ENCODE measurements at regions of chr19 and their contacts with region 1.

Region 1: GRCh38 chr19:12346896-12347295 is 13.5 kb upstream of the ZNF563 start:
- DNase-seq: peak in 3 of 9 experiments; percentile 7 to 63 (median 60)
- ATAC-seq: peak; percentile 57
- H3K4me3 ChIP-seq: no peak overlapping the region
- H3K4me3 Mint-ChIP-seq: no peak overlapping the region
- H3K27ac ChIP-seq: no peak overlapping the region
- H3K27ac Mint-ChIP-seq: no peak overlapping the region
- H3K4me1 ChIP-seq: no peaks in the 10 kb centered on the region
- H3K4me1 Mint-ChIP-seq: no peaks in the 10 kb centered on the region
- H3K27me3 ChIP-seq: no peaks in the 10 kb centered on the region
- H3K27me3 Mint-ChIP-seq: no peaks in the 10 kb centered on the region
- CTCF ChIP-seq: no peak

Region 2: GRCh38 chr19:11887611-11888531 is 459.0 kb before region 1 on chr19 and contains the start of gene ZNF69:
- CTCF ChIA-PET with region 1: no interaction called
- POLR2A ChIA-PET with region 1: no interaction called
- intact Hi-C with region 1: loop called in 1 of 2 experiments (anchors 10 kb)
- DNase-seq: peak; percentile 16 to 83 (median 67)
- ATAC-seq: peak; percentile 89
- H3K4me3 ChIP-seq: peak within 1 kb of the TSS; percentile 63 to 80
- H3K4me3 Mint-ChIP-seq: peak within 1 kb of the TSS; percentile 93
- H3K27ac ChIP-seq: peak within 1 kb of the TSS; percentile 46 to 48
- H3K27ac Mint-ChIP-seq: peak within 1 kb of the TSS; percentile 91
- H3K4me1 ChIP-seq: peaks cover 12% of the 10 kb centered on the region
- H3K4me1 Mint-ChIP-seq: peaks cover 36% of the 10 kb centered on the region
- H3K27me3 ChIP-seq: no peaks in the 10 kb centered on the region
- H3K27me3 Mint-ChIP-seq: no peaks in the 10 kb centered on the region
- CTCF ChIP-seq: no peak
- total RNA-seq, gene ZNF69: 1.7 to 2.0 TPM

Region 3: DNA sequence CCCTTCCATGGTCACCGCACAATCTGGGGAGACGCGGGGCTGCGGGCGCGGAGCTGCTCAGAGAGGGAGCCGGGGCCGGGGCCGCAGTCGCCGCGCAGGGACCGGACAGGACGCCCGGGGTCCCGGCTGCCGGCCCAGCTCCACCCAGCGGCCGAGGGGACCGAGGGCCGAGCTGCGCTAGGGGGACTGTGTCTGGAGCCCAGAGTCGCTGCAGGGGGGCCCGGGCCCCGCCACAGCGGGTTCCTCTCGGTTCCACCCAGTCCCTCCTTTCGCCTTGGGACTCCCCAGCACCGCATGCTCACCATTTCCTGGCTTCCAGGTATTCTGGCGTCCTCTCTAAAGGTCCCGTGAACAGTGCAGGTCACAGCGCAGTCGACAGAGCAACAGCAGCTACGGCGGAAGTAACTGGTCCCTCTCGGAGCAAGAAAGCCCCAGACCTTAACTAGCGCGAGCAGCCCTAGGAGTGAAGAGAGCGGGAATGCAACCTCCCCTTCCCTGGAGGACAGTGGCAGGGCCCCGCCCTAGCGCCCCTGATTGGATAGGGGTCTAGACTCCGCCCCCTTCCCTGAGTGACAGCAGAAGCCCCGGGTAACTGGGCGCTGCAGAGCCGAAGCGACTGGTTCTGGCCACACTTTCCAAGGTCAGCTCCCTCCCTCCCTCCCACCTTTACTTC is 294.3 kb before region 1 on chr19 and contains the start of gene ZNF878:
- CTCF ChIA-PET with region 1: no interaction called
- POLR2A ChIA-PET with region 1: no interaction called
- intact Hi-C with region 1: loop called in 1 of 2 experiments (anchors 10 kb)
- DNase-seq: peak in 8 of 9 experiments; percentile 19 to 65 (median 42)
- ATAC-seq: peak; percentile 72
- H3K4me3 ChIP-seq: peak within 1 kb of the TSS; percentile 59 to 75
- H3K4me3 Mint-ChIP-seq: peak within 1 kb of the TSS; percentile 84
- H3K27ac ChIP-seq: no peak within 1 kb of the TSS
- H3K27ac Mint-ChIP-seq: peak within 1 kb of the TSS; percentile 37
- H3K4me1 ChIP-seq: peaks cover 10% of the 10 kb centered on the region
- H3K4me1 Mint-ChIP-seq: peaks cover 15% of the 10 kb centered on the region
- H3K27me3 ChIP-seq: no peaks in the 10 kb centered on the region
- H3K27me3 Mint-ChIP-seq: peaks cover 12% of the 10 kb centered on the region
- CTCF ChIP-seq: no peak
- total RNA-seq, gene ZNF878: not detected

Region 4: DNA sequence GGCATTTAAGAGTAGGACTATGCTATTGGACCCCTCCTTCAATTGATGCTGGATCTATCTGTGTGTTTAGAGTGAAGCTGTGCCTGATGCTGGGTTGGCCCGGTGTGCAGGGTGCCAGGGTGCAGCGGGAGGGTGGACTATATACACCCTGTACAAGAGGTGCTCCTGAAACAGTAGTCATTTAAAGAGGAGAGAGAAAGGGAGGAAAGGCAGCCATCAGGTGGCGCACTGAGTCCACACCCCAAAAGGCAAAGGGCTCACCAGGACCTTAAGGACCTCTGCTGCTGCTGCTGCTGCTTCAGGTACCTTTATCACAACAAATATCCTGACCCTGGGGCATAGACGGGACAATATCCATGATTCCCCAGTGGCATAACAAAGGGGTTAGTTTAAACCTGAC is 144.6 kb before region 1 on chr19:
- CTCF ChIA-PET with region 1: interaction called, 4 read pairs
- POLR2A ChIA-PET with region 1: no interaction called
- intact Hi-C with region 1: loop called (anchors 1 kb)
- DNase-seq: peak; percentile 28 to 77 (median 62)
- ATAC-seq: peak; percentile 83
- H3K4me3 ChIP-seq: no peak overlapping the region
- H3K4me3 Mint-ChIP-seq: no peak overlapping the region
- H3K27ac ChIP-seq: no peak overlapping the region
- H3K27ac Mint-ChIP-seq: no peak overlapping the region
- H3K4me1 ChIP-seq: peaks cover 8% of the 10 kb centered on the region
- H3K4me1 Mint-ChIP-seq: peaks cover 18% of the 10 kb centered on the region
- H3K27me3 ChIP-seq: no peaks in the 10 kb centered on the region
- H3K27me3 Mint-ChIP-seq: no peaks in the 10 kb centered on the region
- CTCF ChIP-seq: peak; percentile 36

Region 5: GRCh38 chr19:12484371-12485051 is 137.6 kb after region 1 on chr19 and contains the start of gene ZNF709:
- CTCF ChIA-PET with region 1: no interaction called
- POLR2A ChIA-PET with region 1: no interaction called
- intact Hi-C with region 1: no loop called
- DNase-seq: peak; percentile 78 to 93 (median 90)
- ATAC-seq: peak; percentile 98
- H3K4me3 ChIP-seq: peak within 1 kb of the TSS; percentile 92 to 93
- H3K4me3 Mint-ChIP-seq: peak within 1 kb of the TSS; percentile 94
- H3K27ac ChIP-seq: peak within 1 kb of the TSS; percentile 73 to 76
- H3K27ac Mint-ChIP-seq: peak within 1 kb of the TSS; percentile 94
- H3K4me1 ChIP-seq: peaks cover 23% of the 10 kb centered on the region
- H3K4me1 Mint-ChIP-seq: peaks cover 31% of the 10 kb centered on the region
- H3K27me3 ChIP-seq: no peaks in the 10 kb centered on the region
- H3K27me3 Mint-ChIP-seq: no peaks in the 10 kb centered on the region
- CTCF ChIP-seq: no peak
- total RNA-seq, gene ZNF709: 4.3 to 4.5 TPM

Region 6: DNA sequence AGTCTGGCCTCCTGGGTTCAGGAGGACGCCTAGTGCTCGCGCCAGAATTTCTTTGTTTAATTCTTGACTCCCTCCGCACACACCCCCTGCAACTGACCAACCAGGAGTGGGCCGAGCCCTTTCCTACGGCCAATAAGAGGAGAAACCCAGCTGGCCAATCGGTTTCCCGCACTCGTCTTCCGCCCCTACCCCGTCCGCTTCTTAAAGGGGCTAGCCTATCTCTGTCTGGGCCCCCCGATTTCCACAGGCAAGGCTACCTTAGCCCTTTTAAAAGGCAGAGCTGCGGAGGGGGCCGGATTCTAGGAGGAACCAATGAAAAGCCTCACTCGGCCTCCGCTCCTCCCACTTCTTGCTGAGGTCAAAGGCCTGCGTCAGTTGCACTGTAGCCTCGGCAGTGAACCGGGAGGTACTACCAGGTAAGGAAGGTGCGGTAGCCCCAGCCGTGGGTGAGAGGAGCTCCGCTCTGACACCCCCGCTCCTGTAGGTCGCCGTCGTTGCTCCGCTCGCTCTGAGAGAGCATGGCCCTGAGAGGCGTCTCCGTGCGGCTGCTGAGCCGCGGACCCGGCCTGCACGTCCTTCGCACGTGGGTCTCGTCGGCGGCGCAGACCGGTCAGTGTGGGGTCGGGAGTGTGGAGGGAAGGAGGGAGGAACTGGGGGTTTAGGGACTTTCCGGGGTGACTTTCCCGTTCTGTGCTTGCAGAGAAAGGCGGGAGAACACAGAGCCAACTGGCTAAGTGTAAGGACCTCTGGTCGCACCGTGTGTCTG is 544.1 kb after region 1 on chr19 and contains the start of gene GCDH:
- CTCF ChIA-PET with region 1: no interaction called
- POLR2A ChIA-PET with region 1: no interaction called
- intact Hi-C with region 1: no loop called
- DNase-seq: peak; percentile 92 to 99 (median 95)
- ATAC-seq: peak; percentile 87
- H3K4me3 ChIP-seq: peak within 1 kb of the TSS; percentile 87 to 92
- H3K4me3 Mint-ChIP-seq: peak within 1 kb of the TSS; percentile 99
- H3K27ac ChIP-seq: peak within 1 kb of the TSS; percentile 77 to 79
- H3K27ac Mint-ChIP-seq: peak within 1 kb of the TSS; percentile 98
- H3K4me1 ChIP-seq: peaks cover 23% of the 10 kb centered on the region
- H3K4me1 Mint-ChIP-seq: peaks cover 29% of the 10 kb centered on the region
- H3K27me3 ChIP-seq: no peaks in the 10 kb centered on the region
- H3K27me3 Mint-ChIP-seq: no peaks in the 10 kb centered on the region
- CTCF ChIP-seq: no peak
- total RNA-seq, gene GCDH: 36.0 to 41.7 TPM

Measured in CD8-positive, alpha-beta T cell (primary cell).